Activated CD8-positive, alpha-beta memory T cell treated with anti-CD3 and anti-CD28 coated beads, Interleukin-2, amount 10 ng/mL, durations not matched to agents 7 days and 5 days (primary cell): ENCODE measurements at regions of chr7 and their contacts with region 1.

Region 1: DNA sequence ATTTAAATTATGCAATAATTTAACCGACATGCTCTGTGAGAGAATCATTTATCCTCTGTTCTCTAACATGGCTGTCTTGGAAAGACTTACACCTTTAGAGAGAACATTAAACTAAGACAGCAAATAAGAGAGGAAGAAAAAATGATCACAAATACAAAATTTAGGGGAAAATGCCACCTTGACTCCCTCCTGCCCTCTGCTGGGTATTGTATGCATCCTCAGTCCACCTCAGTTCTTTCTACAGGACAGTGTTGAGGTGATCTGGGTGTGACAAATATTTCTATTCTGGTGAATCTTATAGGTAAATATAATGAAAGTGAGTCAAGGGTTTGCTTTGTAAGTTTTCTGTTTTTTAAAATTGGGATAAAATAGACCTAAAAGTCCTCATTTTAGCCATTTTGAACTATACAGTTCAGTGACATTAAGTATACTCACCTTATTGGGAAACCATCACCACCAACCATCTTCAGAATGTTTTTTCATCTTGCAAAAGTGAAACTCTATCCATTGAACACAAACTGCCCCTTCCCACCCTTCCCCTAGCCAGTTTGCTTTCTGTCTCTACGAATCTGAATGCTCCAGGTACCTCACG is 61.5 kb upstream of the ELMO1 start:
- DNase-seq: no peak
- ATAC-seq: no peak
- H3K4me3 Mint-ChIP-seq: no peak overlapping the region
- H3K27ac Mint-ChIP-seq: no peak overlapping the region
- H3K4me1 Mint-ChIP-seq: no peaks in the 10 kb centered on the region
- H3K27me3 Mint-ChIP-seq: peaks cover 46% of the 10 kb centered on the region

Region 2: GRCh38 chr7:37455081-37455480 is 55.1 kb before region 1 on chr7:
- CTCF ChIA-PET with region 1: no interaction called
- DNase-seq: no peak
- ATAC-seq: no peak
- H3K4me3 Mint-ChIP-seq: no peak overlapping the region
- H3K27ac Mint-ChIP-seq: no peak overlapping the region
- H3K4me1 Mint-ChIP-seq: peaks cover 7% of the 10 kb centered on the region
- H3K27me3 Mint-ChIP-seq: peaks cover 32% of the 10 kb centered on the region

Region 3: DNA sequence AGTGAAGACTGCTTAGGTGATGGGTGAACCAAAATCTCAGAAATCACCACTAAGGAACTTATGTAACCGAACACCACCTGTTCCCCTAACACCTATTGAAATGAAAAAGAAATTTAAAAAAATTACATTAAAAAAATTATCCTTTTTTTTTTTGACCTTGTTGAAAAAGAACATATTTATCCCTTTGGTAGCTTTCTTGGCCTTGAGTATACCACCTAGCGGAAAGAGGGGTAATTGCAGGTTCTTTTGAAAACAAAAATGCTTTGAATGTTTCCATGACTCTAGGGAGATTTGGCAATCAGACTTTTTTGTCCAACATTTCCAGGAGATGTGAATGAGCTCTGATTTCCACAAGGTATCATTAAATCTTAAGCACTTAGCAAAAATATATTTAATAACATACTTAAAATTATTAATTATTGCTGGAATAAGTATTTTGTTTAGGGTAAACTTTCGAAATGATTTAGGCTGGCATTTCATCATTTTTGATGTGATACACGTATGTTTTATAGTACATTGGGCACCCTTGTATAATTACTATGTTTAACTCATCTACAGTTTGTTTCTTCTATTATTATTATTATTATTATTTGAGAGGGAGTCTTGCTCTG is 14.5 kb before region 1 on chr7:
- CTCF ChIA-PET with region 1: interaction called, 26 read pairs
- DNase-seq: no peak
- ATAC-seq: no peak
- H3K4me3 Mint-ChIP-seq: no peak overlapping the region
- H3K27ac Mint-ChIP-seq: no peak overlapping the region
- H3K4me1 Mint-ChIP-seq: peaks cover 7% of the 10 kb centered on the region
- H3K27me3 Mint-ChIP-seq: no peaks in the 10 kb centered on the region